Gastrocnemius medialis (tissue), 4 donors: ENCODE measurements at regions of chr1 and their contacts with region 1.

Region 1: GRCh38 chr1:66350001-66350547 is 183.9 kb upstream of the SGIP1 start:
- DNase-seq: peak in 1 of 2 donors; percentile 27
- ATAC-seq: peak; percentile 40 to 44
- H3K4me3 ChIP-seq: peak overlapping the region; percentile 2 to 36 (median 26)
- H3K27ac ChIP-seq: peak overlapping the region; percentile 70 to 83 (median 78)
- H3K4me1 ChIP-seq: peaks cover 88 to 100% of the 10 kb centered on the region in 2 donors
- H3K27me3 ChIP-seq: no peaks in the 10 kb centered on the region
- CTCF ChIP-seq: no peak
- POLR2A ChIP-seq: no peak

Region 2: GRCh38 chr1:66265796-66266195 is 84.3 kb before region 1 on chr1:
- in situ Hi-C with region 1: loop called in 1 of 4 experiments (anchors 5 kb)
- intact Hi-C with region 1: no loop called
- DNase-seq: peak in 1 of 2 donors; percentile 24
- ATAC-seq: no peak
- H3K4me3 ChIP-seq: no peak overlapping the region
- H3K27ac ChIP-seq: peak overlapping the region; percentile 74 to 88 (median 82)
- H3K4me1 ChIP-seq: peaks cover 52 to 76% of the 10 kb centered on the region in 2 donors
- H3K27me3 ChIP-seq: no peaks in the 10 kb centered on the region
- CTCF ChIP-seq: no peak
- POLR2A ChIP-seq: no peak